Activated CD8-positive, alpha-beta memory T cell treated with anti-CD3 and anti-CD28 coated beads, Interleukin-2, amount 10 ng/mL, durations not matched to agents 7 days and 5 days (primary cell): ENCODE measurements at regions of chr6 and their contacts with region 1.

Region 1: GRCh38 chr6:31665501-31666336 is at the start of gene CSNK2B:
- DNase-seq: peak; percentile 99
- ATAC-seq: peak; percentile 87
- H3K4me3 Mint-ChIP-seq: peak within 1 kb of the TSS; percentile 90
- H3K27ac Mint-ChIP-seq: peak within 1 kb of the TSS; percentile 95
- H3K4me1 Mint-ChIP-seq: peaks cover 60% of the 10 kb centered on the region
- H3K27me3 Mint-ChIP-seq: no peaks in the 10 kb centered on the region
- total RNA-seq, gene CSNK2B: 206 to 236 TPM

Region 2: GRCh38 chr6:31267651-31268368 is 397.9 kb before region 1 on chr6:
- CTCF ChIA-PET with region 1: no interaction called
- DNase-seq: no peak
- ATAC-seq: no peak
- H3K4me3 Mint-ChIP-seq: peak overlapping the region; percentile 17
- H3K27ac Mint-ChIP-seq: peak overlapping the region; percentile 58
- H3K4me1 Mint-ChIP-seq: peaks cover 33% of the 10 kb centered on the region
- H3K27me3 Mint-ChIP-seq: no peaks in the 10 kb centered on the region

Region 3: GRCh38 chr6:31630177-31630934 is 35.4 kb before region 1 on chr6:
- CTCF ChIA-PET with region 1: no interaction called
- DNase-seq: no peak
- ATAC-seq: no peak
- H3K4me3 Mint-ChIP-seq: no peak overlapping the region
- H3K27ac Mint-ChIP-seq: no peak overlapping the region
- H3K4me1 Mint-ChIP-seq: peaks cover 9% of the 10 kb centered on the region
- H3K27me3 Mint-ChIP-seq: no peaks in the 10 kb centered on the region

Region 4: DNA sequence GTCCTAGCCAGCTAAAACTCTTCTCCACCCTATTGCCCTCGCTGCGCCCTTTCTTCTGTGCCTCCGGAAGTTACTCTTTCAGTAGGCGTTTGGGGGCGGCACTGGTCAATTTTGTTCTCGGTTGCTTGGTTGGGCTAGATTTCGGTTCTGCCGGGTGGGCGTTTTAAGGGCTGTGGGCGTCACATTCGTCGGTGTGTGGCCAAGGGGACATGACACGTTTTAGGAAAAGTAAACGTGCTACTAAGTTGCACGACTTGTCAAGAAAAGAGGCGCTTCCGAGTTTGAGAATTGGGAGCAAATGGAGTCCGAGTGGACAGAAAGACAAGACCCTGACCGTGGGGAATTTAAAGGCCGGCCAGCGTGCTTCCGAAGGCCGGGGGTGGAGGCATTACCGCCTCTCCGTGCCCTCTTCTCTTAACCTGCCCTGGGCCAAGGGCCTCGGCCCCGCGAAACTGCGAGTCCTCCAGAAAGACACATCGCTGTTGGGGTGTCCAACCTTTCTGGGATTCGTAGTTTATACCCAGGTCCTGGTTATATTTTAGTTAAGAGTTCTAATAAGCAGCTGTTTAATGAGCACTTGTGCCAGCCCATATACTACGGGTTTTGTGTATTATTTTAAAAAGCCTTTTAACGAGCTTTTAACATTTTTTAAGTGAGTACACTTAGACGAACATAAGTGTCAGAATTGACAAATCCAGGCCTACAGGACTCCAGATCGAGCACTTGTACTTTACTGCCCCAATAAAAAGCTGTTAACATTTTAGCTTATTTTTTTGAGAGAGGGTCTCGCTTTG is 12.6 kb before region 1 on chr6:
- CTCF ChIA-PET with region 1: interaction called, 39 read pairs
- DNase-seq: peak; percentile 94
- ATAC-seq: peak; percentile 74
- H3K4me3 Mint-ChIP-seq: peak overlapping the region; percentile 89
- H3K27ac Mint-ChIP-seq: peak overlapping the region; percentile 96
- H3K4me1 Mint-ChIP-seq: peaks cover 62% of the 10 kb centered on the region
- H3K27me3 Mint-ChIP-seq: no peaks in the 10 kb centered on the region